Activated B cell treated with CpG ODN at 0.5 μM for 24 hours (primary cell): ENCODE measurements at regions of chr19 and their contacts with region 1.

Region 1: DNA sequence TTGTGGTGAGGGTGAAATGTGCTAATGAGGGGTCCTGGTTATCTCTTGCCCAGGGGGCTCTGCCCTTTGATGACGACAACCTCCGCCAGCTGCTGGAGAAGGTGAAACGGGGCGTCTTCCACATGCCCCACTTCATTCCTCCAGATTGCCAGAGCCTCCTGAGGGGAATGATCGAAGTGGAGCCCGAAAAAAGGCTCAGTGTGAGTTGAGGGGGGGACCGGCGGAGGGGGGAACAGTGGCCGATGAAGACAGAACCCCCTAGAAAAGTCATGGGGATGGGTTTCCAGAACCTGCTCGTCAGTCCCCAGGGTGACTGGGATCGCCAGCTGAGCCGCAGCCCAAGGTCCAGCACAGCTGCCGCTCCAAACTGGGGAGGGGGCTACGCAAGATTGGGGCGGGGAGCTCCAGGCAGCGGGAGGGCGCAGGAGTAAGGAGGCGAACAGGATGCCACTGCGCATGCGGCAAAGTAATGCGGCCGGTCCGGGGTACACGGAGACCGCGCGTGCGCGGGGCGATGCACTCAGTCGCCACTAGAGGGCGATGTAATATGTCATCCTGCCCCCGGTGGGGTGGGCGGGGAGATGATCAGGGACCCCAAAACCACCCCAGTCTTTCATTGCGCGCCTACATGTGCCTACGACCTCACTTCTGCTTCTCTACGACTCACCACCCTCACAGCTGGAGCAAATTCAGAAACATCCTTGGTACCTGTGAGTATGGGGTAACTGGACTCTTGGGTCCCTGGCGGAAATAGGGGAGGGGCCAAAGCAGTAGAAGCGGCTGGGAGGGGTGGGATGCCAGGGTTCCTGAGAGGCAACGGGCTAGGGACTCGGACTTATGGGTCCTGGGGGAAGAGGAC is 17.9 kb downstream of the BRSK1 start:
- DNase-seq: peak; percentile 95
- ATAC-seq: peak; percentile 91
- H3K4me3 Mint-ChIP-seq: peak overlapping the region; percentile 75
- H3K27ac Mint-ChIP-seq: peak overlapping the region; percentile 37
- H3K4me1 Mint-ChIP-seq: peaks cover 8% of the 10 kb centered on the region
- H3K27me3 Mint-ChIP-seq: no peaks in the 10 kb centered on the region
- CTCF ChIP-seq: peak; percentile 90

Region 2: DNA sequence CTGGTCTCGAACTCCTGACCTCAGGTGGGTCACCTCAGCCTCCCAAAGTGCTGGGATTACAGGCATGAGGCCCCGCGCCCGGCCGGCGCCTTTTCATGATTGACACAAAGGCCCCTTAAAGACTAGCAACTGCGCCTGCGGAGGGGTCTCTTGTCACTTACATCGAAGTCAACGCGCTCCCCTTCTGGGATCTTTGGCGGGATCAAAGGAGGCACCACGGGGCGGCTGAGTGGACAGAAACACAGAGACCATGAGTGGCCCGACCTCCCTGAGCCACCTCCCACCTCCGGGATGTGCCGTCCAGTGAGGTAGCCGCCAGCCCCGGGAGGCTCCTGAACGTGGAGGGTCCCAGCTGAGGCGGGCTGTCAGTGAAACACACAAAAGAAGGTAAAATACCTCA is 160.0 kb before region 1 on chr19:
- CTCF ChIA-PET with region 1: interaction called, 7 read pairs
- POLR2A ChIA-PET with region 1: no interaction called
- intact Hi-C with region 1: loop called (anchors 5 kb)
- DNase-seq: no peak
- ATAC-seq: no peak
- H3K4me3 Mint-ChIP-seq: no peak overlapping the region
- H3K27ac Mint-ChIP-seq: no peak overlapping the region
- H3K4me1 Mint-ChIP-seq: peaks cover 6% of the 10 kb centered on the region
- H3K27me3 Mint-ChIP-seq: peaks cover 51% of the 10 kb centered on the region
- CTCF ChIP-seq: no peak

Region 3: DNA sequence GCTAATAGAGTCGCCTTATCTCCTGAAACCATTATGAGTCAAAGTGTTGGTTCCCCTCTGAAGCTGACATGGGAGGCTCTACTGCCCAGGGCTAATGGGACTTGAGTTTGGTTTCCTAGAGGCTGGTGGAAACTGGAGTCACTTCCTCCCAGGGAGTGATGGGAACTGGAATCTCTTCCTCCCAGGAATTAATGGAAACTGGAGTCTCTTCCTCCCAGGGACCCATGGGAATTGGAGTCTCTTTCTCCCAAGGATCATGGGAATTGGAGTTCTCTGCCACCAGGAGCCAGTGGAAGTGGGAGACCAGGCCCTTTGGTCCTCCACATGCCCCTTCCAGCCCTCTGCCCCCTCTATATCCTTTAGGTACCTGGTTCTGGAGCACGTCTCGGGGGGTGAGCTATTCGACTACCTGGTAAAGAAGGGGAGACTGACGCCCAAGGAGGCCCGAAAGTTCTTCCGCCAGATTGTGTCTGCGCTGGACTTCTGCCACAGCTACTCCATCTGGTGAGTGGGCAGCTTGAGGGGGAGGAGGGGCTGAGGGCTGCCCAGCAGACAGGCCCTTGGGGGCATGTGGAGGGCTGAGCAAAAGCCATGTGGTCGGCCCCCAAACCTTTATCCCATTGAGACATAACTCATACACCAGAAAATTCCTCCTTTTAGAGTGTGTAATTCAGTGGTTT is 12.4 kb before region 1 on chr19:
- CTCF ChIA-PET with region 1: interaction called, 15 read pairs
- POLR2A ChIA-PET with region 1: no interaction called
- intact Hi-C with region 1: no loop called
- DNase-seq: no peak
- ATAC-seq: no peak
- H3K4me3 Mint-ChIP-seq: no peak overlapping the region
- H3K27ac Mint-ChIP-seq: no peak overlapping the region
- H3K4me1 Mint-ChIP-seq: peaks cover 4% of the 10 kb centered on the region
- H3K27me3 Mint-ChIP-seq: no peaks in the 10 kb centered on the region
- CTCF ChIP-seq: no peak

Region 4: DNA sequence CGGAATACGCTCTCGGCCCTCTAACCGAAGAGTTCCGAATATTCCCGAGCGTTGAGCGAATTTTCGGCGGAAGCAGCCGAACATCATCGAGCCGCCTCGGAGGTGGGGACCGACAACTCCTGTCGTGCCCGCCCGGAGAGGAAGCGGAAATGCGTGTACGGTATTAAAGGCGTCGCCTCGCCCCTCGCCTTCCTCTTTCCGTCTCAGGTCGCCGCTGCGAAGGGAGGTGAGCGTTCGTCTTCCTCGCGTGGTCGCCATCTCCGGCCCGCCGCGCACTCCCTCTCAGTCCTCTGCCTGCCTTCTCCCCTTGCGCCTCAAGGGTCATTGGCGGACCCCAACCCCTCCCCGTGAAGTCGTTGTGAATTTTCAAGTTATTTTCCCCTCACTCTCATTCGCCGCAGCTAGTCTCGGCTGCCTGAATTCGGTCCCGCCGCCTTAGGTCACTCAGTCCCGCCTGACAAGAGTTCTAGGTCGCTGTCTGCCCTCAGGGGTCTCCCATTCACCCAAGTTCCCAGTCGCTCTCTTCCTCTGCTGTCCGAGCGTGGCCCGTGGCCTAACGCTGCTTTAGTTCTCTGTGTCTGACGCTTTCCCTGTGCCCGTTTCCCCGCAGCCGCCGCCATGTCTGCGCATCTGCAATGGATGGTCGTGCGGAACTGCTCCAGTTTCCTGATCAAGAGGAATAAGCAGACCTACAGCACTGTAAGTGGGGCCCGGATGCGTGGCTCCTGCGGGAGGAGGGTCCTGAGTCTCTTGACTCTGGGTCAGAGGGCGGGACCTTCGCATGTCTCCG is 84.2 kb after region 1 on chr19 and contains the start of gene RPL28:
- CTCF ChIA-PET with region 1: interaction called, 14 read pairs
- POLR2A ChIA-PET with region 1: interaction called, 3 read pairs
- intact Hi-C with region 1: loop called (anchors 1 kb)
- DNase-seq: peak; percentile 95
- ATAC-seq: peak; percentile 79
- H3K4me3 Mint-ChIP-seq: peak within 1 kb of the TSS; percentile 100
- H3K27ac Mint-ChIP-seq: peak within 1 kb of the TSS; percentile 99
- H3K4me1 Mint-ChIP-seq: peaks cover 67% of the 10 kb centered on the region
- H3K27me3 Mint-ChIP-seq: no peaks in the 10 kb centered on the region
- CTCF ChIP-seq: no peak
- total RNA-seq, gene RPL28: 3,790 and 4,042 TPM in 2 replicates

Region 5: GRCh38 chr19:55586976-55587668 is 285.4 kb after region 1 on chr19:
- CTCF ChIA-PET with region 1: no interaction called
- POLR2A ChIA-PET with region 1: interaction called, 11 read pairs
- intact Hi-C with region 1: no loop called
- DNase-seq: peak; percentile 89
- ATAC-seq: peak; percentile 96
- H3K4me3 Mint-ChIP-seq: peak overlapping the region; percentile 85
- H3K27ac Mint-ChIP-seq: peak overlapping the region; percentile 72
- H3K4me1 Mint-ChIP-seq: peaks cover 29% of the 10 kb centered on the region
- H3K27me3 Mint-ChIP-seq: no peaks in the 10 kb centered on the region
- CTCF ChIP-seq: no peak